PC-9 (cell line): ENCODE measurements at regions of chrX and their contacts with region 1.

Region 1: GRCh38 chrX:11758400-11759171 is 549 bp downstream of the MSL3 start:
- DNase-seq: peak; percentile 49 to 82
- H3K4me3 ChIP-seq: peak overlapping the region; percentile 93
- H3K27ac ChIP-seq: no peak overlapping the region; the same call in 1 of the 2 replicates
- H3K4me1 ChIP-seq: peaks cover 13% of the 10 kb centered on the region
- H3K27me3 ChIP-seq: no peaks in the 10 kb centered on the region
- CTCF ChIP-seq: peak; percentile 55

Region 2: DNA sequence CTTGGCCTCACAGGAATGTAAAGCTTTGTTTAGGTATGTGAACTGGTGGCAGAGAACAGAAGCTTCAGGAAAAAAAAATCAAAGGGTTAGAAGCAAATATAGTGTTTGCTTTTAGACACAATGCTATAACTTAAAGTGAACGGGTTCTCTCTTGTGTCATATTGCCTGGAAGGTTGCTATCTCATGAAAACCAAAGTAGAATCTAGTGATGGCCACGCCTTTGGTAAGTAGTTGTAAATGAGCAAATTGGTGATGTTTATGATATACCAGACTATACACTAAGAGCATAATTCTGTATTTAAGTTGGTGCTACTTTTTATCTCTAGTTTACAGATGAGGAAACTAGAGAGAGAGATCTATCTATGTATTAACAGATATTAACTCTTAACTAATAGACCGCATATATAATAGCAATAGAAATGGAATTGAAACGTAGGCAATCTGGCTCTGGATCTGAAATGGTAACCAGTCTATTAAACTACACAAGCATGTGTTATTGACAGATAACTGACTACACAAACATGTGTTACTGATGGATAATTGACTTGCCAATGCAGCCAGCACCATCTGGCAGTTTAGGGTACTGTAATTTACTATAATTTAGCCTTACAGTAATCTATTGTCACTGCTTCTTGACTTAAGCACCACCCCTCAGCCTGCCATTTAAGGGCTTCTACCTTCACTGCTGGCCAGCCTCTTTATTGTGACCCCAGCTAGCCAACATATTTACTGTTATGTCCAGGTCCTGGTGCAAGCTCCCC is 606.6 kb before region 1 on chrX:
- CTCF ChIA-PET with region 1: interaction called, 12 read pairs
- POLR2A ChIA-PET with region 1: no interaction called
- intact Hi-C with region 1: no loop called
- DNase-seq: no peak
- H3K4me3 ChIP-seq: no peak overlapping the region
- H3K27ac ChIP-seq: no peak overlapping the region
- H3K4me1 ChIP-seq: no peaks in the 10 kb centered on the region
- H3K27me3 ChIP-seq: 0 out of 2 replicates have a peak, but pooled peaks cover 6% of the 10 kb centered on the region
- CTCF ChIP-seq: no peak

Region 3: DNA sequence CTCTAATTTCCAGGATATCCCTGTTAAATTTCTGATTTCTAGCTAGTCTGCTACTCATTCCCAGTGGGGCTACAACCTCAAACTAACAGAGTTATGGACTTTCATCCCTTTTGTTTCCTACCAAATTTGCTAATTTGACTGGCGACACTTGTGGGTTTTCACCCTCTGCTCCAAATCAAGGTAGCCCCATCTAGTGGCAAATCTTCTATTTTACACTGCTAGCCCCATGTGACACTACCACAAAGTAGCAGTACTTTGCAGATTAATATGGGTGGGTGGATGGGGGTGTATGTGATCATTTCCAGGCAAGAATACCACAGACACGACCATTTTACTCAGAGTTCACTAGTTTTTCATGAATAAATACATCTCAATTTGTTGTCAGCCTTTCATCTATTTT is 149.8 kb after region 1 on chrX:
- CTCF ChIA-PET with region 1: no interaction called
- POLR2A ChIA-PET with region 1: no interaction called
- intact Hi-C with region 1: loop called (anchors 5 kb)
- DNase-seq: no peak
- H3K4me3 ChIP-seq: no peak overlapping the region
- H3K27ac ChIP-seq: no peak overlapping the region
- H3K4me1 ChIP-seq: no peaks in the 10 kb centered on the region
- H3K27me3 ChIP-seq: no peaks in the 10 kb centered on the region
- CTCF ChIP-seq: peak; percentile 52

Region 4: DNA sequence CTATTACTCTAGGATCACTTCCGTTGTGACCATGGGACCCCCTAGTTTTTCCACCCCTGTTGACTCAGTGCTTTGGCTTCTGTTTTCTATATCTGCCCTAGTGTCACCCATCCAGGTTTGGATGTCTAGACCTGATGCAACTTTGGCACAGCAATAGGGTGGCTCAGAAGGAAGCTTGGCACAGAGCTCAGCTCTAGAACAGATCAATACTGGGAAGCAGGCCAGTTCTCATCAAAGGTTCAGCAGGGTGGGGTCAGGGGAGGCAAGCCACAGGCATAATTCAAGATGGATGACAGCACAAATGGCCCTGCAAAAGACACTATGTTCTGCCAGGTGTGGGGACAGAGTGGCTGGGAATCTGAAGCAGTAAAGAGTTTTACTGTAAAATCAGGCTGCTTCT is 1736.6 kb after region 1 on chrX:
- CTCF ChIA-PET with region 1: no interaction called
- POLR2A ChIA-PET with region 1: no interaction called
- intact Hi-C with region 1: loop called (anchors 10 kb)
- DNase-seq: peak in 1 of 2 experiments; percentile 55
- H3K4me3 ChIP-seq: no peak overlapping the region
- H3K27ac ChIP-seq: no peak overlapping the region
- H3K4me1 ChIP-seq: peaks cover 10% of the 10 kb centered on the region; the same call in 1 of the 2 replicates
- H3K27me3 ChIP-seq: no peaks in the 10 kb centered on the region
- CTCF ChIP-seq: no peak